ENCODE measurements at regions of chr5 and their contacts with region 1.

Region 1: GRCh38 chr5:39376293-39376714 is 12.0 kb upstream of the C9 start:
- DNase-seq: peak; percentile 57
- ATAC-seq: peak; percentile 95
- H3K4me3 ChIP-seq: no peak overlapping the region
- H3K27ac ChIP-seq: no peak overlapping the region
- H3K4me1 ChIP-seq: no peaks in the 10 kb centered on the region
- H3K27me3 ChIP-seq: no peaks in the 10 kb centered on the region
- CTCF ChIP-seq: peak; percentile 85
- EP300 ChIP-seq: no peak
- POLR2A ChIP-seq: no peak
- RAD21 ChIP-seq: peak; percentile 76

Region 2: DNA sequence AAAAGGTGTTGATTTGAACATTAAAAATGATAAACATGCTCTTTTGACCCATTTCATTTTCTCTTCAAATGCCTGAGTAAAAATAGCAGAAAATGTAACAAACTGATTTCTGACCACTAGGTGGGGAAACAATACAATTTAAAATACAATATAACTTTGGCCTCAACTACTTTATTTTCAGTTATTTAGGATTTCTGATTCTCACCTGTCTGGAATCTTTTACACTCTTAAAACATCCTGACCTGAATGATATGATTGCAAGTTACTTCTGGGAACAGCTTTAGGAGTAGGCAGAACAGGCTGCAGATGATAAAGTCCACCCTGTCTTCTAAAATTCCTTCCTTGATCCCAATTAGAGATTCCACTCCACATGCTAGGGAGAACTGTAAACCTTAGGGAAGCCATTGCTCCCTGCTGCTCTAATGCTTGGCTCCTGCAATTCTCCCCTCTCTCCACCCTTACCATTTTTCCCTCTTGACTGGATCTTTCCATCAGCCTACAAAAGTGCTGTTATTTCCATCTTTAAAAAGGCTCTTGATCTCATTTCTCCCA is 227.2 kb before region 1 on chr5:
- CTCF ChIA-PET with region 1: no interaction called
- POLR2A ChIA-PET with region 1: no interaction called
- in situ Hi-C with region 1: no loop called
- intact Hi-C with region 1: loop called (anchors 10 kb)
- DNase-seq: peak; percentile 5
- ATAC-seq: no peak
- H3K4me3 ChIP-seq: no peak overlapping the region
- H3K27ac ChIP-seq: no peak overlapping the region
- H3K4me1 ChIP-seq: no peaks in the 10 kb centered on the region
- H3K27me3 ChIP-seq: no peaks in the 10 kb centered on the region
- CTCF ChIP-seq: 0 out of 2 replicates have a peak, but pooled peaks have one; percentile 13
- EP300 ChIP-seq: no peak
- POLR2A ChIP-seq: no peak
- RAD21 ChIP-seq: no peak

Region 3: GRCh38 chr5:39249564-39250274 is 126.6 kb before region 1 on chr5:
- CTCF ChIA-PET with region 1: no interaction called
- POLR2A ChIA-PET with region 1: no interaction called
- in situ Hi-C with region 1: no loop called
- intact Hi-C with region 1: no loop called
- DNase-seq: no peak
- ATAC-seq: no peak
- H3K4me3 ChIP-seq: no peak overlapping the region
- H3K27ac ChIP-seq: no peak overlapping the region
- H3K4me1 ChIP-seq: no peaks in the 10 kb centered on the region
- H3K27me3 ChIP-seq: no peaks in the 10 kb centered on the region
- CTCF ChIP-seq: no peak
- EP300 ChIP-seq: no peak
- POLR2A ChIP-seq: no peak
- RAD21 ChIP-seq: no peak

Region 4: GRCh38 chr5:39520232-39520572 is 143.9 kb after region 1 on chr5:
- CTCF ChIA-PET with region 1: no interaction called
- POLR2A ChIA-PET with region 1: no interaction called
- in situ Hi-C with region 1: no loop called
- intact Hi-C with region 1: no loop called
- DNase-seq: no peak
- ATAC-seq: no peak
- H3K4me3 ChIP-seq: no peak overlapping the region
- H3K27ac ChIP-seq: no peak overlapping the region
- H3K4me1 ChIP-seq: peaks cover 6% of the 10 kb centered on the region; the same call in 1 of the 2 replicates
- H3K27me3 ChIP-seq: peaks cover 0 to 2% of the 10 kb centered on the region in 2 experiments; a peak in 1 of 5 replicates
- CTCF ChIP-seq: no peak
- EP300 ChIP-seq: no peak
- POLR2A ChIP-seq: no peak
- RAD21 ChIP-seq: no peak

Region 5: GRCh38 chr5:39547553-39548154 is 171.3 kb after region 1 on chr5:
- CTCF ChIA-PET with region 1: interaction called, 66 read pairs
- POLR2A ChIA-PET with region 1: interaction called, 3 read pairs
- in situ Hi-C with region 1: loop called (anchors 5 kb)
- intact Hi-C with region 1: loop called (anchors 1 kb)
- DNase-seq: peak; percentile 41
- ATAC-seq: peak; percentile 74
- H3K4me3 ChIP-seq: no peak overlapping the region
- H3K27ac ChIP-seq: no peak overlapping the region
- H3K4me1 ChIP-seq: no peaks in the 10 kb centered on the region
- H3K27me3 ChIP-seq: peaks cover 0 to 8% of the 10 kb centered on the region in 2 experiments; a peak in 1 of 5 replicates
- CTCF ChIP-seq: peak; percentile 72
- EP300 ChIP-seq: no peak
- POLR2A ChIP-seq: no peak
- RAD21 ChIP-seq: peak; percentile 67

Region 6: DNA sequence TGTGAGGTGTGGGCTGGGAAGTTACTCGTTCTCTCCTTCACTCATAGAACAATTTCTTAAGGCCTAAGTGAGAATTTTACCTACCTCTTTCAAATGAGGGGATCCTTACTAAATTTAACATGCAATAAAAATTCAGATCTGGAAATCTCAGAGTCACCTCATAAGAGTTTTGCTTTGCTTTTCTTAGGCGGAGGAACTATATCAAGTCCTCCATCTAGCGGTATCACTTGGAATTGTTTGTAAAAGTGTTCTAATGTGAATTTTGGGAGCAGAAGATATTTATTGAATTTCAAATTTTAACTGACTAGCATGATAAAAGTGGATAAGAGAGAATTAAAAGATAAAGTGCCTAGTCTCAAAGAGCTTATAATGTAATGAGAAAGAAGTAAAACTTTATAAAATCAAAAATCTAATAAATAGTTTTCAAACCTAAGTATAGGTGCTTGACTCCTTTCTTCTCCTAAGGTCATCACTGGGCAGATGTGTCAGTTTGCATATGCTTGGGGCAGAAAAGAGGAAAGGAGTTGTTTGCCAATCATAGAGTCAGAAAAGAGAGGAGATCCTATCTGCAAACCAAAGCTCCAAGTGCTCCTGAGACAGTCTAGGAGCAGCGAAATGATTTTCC is 194.2 kb after region 1 on chr5:
- CTCF ChIA-PET with region 1: interaction called, 18 read pairs
- POLR2A ChIA-PET with region 1: no interaction called
- in situ Hi-C with region 1: no loop called
- intact Hi-C with region 1: loop called (anchors 1 kb)
- DNase-seq: peak; percentile 24
- ATAC-seq: no peak
- H3K4me3 ChIP-seq: no peak overlapping the region
- H3K27ac ChIP-seq: no peak overlapping the region
- H3K4me1 ChIP-seq: peaks cover 7% of the 10 kb centered on the region
- H3K27me3 ChIP-seq: no peaks in the 10 kb centered on the region
- CTCF ChIP-seq: peak; percentile 40
- EP300 ChIP-seq: no peak
- POLR2A ChIP-seq: no peak
- RAD21 ChIP-seq: no peak